PC-9 (cell line): ENCODE measurements at regions of chr12 and their contacts with region 1.

Region 1: GRCh38 chr12:91985002-91985787 is 160.5 kb downstream of the BTG1 start:
- DNase-seq: no peak
- H3K4me3 ChIP-seq: no peak overlapping the region
- H3K27ac ChIP-seq: no peak overlapping the region
- H3K4me1 ChIP-seq: peaks cover 21% of the 10 kb centered on the region
- H3K27me3 ChIP-seq: no peaks in the 10 kb centered on the region
- CTCF ChIP-seq: no peak

Region 2: GRCh38 chr12:91804533-91804932 is 180.7 kb before region 1 on chr12:
- CTCF ChIA-PET with region 1: no interaction called
- POLR2A ChIA-PET with region 1: no interaction called
- intact Hi-C with region 1: loop called (anchors 10 kb)
- DNase-seq: peak in 1 of 2 experiments; percentile 36
- H3K4me3 ChIP-seq: no peak overlapping the region
- H3K27ac ChIP-seq: no peak overlapping the region
- H3K4me1 ChIP-seq: no peaks in the 10 kb centered on the region
- H3K27me3 ChIP-seq: no peaks in the 10 kb centered on the region
- CTCF ChIP-seq: no peak

Region 3: DNA sequence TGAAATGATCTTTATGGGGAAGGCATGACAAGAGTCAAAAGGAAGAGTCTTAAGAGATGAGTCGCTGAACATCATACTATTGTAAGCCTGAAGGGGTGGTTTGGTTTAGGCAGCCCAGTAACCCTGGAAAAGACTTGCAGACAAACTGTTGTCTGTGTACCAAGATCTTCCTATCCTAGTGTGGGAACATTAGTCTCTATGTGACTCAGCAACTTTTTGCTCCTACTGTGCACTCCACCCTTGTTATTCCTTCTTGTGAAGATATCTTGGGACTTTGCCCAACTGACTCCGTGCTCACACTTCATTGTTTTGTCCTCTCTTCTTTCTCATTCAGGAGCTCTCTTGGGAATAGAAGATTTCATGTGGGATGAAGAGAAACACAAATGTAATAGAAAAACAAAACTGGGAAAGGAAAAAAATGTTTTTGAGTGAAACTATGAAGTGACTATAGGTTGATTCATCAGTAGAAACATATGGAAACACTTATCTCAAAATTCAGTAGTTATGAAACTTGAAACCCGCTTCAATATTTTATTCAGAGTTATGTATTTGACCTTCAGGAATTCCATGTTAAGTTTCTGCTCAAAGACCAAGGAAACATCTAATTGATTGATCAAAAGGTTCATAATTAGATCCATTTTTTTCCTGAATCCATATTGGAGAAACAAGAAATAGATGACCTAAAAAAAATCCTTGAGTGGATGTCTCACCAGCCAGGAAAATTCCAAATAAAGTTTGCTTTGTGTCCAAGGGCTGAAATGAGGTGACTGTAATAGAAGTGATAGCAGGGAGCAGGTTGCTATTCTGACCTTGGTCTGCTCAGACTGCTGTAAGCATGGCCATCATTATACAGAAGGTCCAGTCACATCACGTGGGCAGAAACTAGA is 93.2 kb after region 1 on chr12:
- CTCF ChIA-PET with region 1: no interaction called
- POLR2A ChIA-PET with region 1: no interaction called
- intact Hi-C with region 1: loop called (anchors 2 kb)
- DNase-seq: peak; percentile 28 to 69
- H3K4me3 ChIP-seq: no peak overlapping the region
- H3K27ac ChIP-seq: peak overlapping the region; percentile 96
- H3K4me1 ChIP-seq: peaks cover 42% of the 10 kb centered on the region
- H3K27me3 ChIP-seq: no peaks in the 10 kb centered on the region
- CTCF ChIP-seq: no peak

Region 4: DNA sequence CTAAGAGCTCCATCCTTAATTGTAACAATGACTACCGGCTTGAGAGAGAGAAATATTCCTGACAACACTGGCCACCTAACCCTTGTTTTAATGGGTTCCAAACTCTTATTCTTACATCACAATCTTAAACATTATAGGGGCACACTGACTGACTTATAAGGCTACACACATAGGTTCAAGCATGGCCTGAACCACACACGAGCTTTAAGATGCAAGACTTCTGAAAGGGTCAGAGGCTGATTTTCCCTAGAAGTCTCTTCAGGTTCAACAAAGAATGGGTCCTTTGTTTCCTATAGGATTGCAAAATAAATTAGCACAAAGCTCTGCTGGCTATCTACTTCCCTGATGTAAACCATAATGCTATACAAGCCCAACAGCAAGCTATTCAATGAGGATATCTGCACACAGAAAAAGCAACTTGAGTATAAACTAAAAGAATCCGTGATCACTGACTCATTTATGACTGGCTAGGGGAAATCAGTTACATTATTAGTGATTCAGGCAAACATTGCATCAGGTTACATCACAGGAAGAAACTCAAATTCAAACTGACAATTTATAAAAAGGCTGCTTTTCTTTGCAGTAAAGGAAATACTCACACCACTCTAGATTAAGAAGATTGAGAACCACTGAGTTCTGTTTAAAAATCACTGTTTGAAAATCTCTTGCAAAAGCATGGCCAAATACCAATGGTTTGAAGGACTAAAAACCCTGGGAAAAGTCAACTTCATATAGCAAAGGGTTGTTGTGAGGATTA is 151.9 kb after region 1 on chr12:
- CTCF ChIA-PET with region 1: no interaction called
- POLR2A ChIA-PET with region 1: no interaction called
- intact Hi-C with region 1: loop called (anchors 2 kb)
- DNase-seq: peak in 1 of 2 experiments; percentile 84
- H3K4me3 ChIP-seq: peak overlapping the region; percentile 72
- H3K27ac ChIP-seq: peak overlapping the region; percentile 96
- H3K4me1 ChIP-seq: peaks cover 88% of the 10 kb centered on the region
- H3K27me3 ChIP-seq: no peaks in the 10 kb centered on the region
- CTCF ChIP-seq: no peak

Region 5: GRCh38 chr12:92341065-92341668 is 356.0 kb after region 1 on chr12:
- CTCF ChIA-PET with region 1: no interaction called
- POLR2A ChIA-PET with region 1: no interaction called
- intact Hi-C with region 1: no loop called
- DNase-seq: no peak
- H3K4me3 ChIP-seq: no peak overlapping the region
- H3K27ac ChIP-seq: no peak overlapping the region
- H3K4me1 ChIP-seq: 0 out of 2 replicates have a peak, but pooled peaks cover 7% of the 10 kb centered on the region
- H3K27me3 ChIP-seq: no peaks in the 10 kb centered on the region
- CTCF ChIP-seq: no peak